Gastrocnemius medialis (tissue), 4 donors: ENCODE measurements at regions of chr9 and their contacts with region 1.

Region 1: GRCh38 chr9:118418887-118419565 is 714.8 kb downstream of the TLR4 start:
- DNase-seq: no peak
- ATAC-seq: no peak
- H3K4me3 ChIP-seq: no peak overlapping the region
- H3K27ac ChIP-seq: no peak overlapping the region
- H3K4me1 ChIP-seq: no peaks in the 10 kb centered on the region
- H3K27me3 ChIP-seq: no peaks in the 10 kb centered on the region
- CTCF ChIP-seq: no peak
- POLR2A ChIP-seq: no peak

Region 2: GRCh38 chr9:118473521-118473920 is 54.5 kb after region 1 on chr9:
- in situ Hi-C with region 1: no loop called
- intact Hi-C with region 1: no loop called
- DNase-seq: no peak
- ATAC-seq: no peak
- H3K4me3 ChIP-seq: no peak overlapping the region
- H3K27ac ChIP-seq: no peak overlapping the region
- H3K4me1 ChIP-seq: no peaks in the 10 kb centered on the region
- H3K27me3 ChIP-seq: no peaks in the 10 kb centered on the region
- CTCF ChIP-seq: no peak
- POLR2A ChIP-seq: no peak

Region 3: DNA sequence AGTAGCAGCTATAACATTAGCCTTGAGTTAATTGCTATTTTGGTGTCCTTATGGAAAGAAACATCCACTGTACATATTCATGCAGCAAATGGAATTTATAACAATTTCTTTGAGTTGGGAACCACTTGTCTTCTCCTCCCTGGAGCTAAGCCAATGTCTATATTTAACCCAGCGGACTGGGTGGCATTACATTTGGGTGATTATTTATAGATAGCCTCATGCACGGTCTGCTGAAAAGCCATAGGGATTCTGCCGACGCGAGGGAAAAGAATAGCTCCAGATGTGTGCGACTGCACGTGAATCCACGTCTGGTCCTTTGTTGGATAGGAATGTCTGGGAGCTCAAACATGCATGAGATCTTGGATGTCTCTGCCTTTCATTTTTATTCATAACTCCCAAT is 1107.7 kb after region 1 on chr9:
- in situ Hi-C with region 1: no loop called
- intact Hi-C with region 1: loop called (anchors 10 kb)
- DNase-seq: no peak
- ATAC-seq: no peak
- H3K4me3 ChIP-seq: no peak overlapping the region
- H3K27ac ChIP-seq: no peak overlapping the region
- H3K4me1 ChIP-seq: no peaks in the 10 kb centered on the region
- H3K27me3 ChIP-seq: no peaks in the 10 kb centered on the region
- CTCF ChIP-seq: no peak
- POLR2A ChIP-seq: no peak